CD8-positive, alpha-beta T cell (primary cell): ENCODE measurements at regions of chr19 and their contacts with region 1.

Region 1: GRCh38 chr19:23914402-23915301 is at the start of gene ZNF726:
- DNase-seq: peak; percentile 74 to 94 (median 86)
- ATAC-seq: peak; percentile 98
- H3K4me3 ChIP-seq: peak within 1 kb of the TSS; percentile 56 to 72
- H3K4me3 Mint-ChIP-seq: peak within 1 kb of the TSS; percentile 94
- H3K27ac ChIP-seq: peak within 1 kb of the TSS; percentile 43 to 47
- H3K27ac Mint-ChIP-seq: peak within 1 kb of the TSS; percentile 88
- H3K4me1 ChIP-seq: peaks cover 6% of the 10 kb centered on the region
- H3K4me1 Mint-ChIP-seq: peaks cover 13% of the 10 kb centered on the region
- H3K27me3 ChIP-seq: no peaks in the 10 kb centered on the region
- H3K27me3 Mint-ChIP-seq: no peaks in the 10 kb centered on the region
- CTCF ChIP-seq: no peak
- total RNA-seq, gene ZNF726: 3.5 to 4.4 TPM

Region 2: DNA sequence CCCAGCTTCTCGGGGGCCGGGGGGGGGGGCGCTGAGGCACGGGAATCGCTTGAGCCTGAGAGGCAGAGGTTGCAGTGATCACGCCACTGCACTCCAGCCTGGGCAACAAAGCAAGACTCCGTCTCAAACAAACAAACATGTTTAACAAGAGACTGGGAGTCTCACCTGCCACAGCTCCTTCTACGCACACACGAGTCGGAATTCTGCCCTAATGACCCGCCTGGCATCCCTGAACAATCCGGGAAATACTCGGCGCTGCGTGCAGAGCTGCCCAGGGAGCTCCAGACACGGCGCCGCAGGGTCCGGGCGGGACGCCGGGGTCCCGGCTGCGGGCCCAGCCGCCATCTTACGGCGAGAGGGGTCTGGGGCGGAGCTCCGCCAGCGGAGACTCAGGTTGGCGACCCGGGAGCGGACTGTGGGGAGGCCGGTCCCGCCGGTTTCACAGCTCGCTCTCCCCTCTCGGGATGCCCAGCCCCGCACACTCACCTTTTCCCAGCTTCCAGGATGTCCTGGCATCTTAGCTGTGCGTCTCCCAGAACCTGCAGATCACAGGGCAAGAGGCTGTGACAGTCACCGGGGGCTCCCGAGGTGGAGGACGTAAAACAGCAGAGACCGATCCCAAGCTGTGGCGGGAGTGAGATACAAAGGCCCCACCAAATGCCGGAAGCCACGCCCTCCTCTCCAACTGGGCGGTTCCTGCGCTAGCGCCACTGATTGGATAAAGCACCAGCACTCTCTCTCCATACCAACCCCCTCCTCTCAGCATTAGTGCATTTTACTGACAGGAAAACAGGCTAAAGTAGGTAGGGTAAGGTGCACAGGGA is 640.9 kb before region 1 on chr19:
- CTCF ChIA-PET with region 1: no interaction called
- POLR2A ChIA-PET with region 1: interaction called, 7 read pairs
- intact Hi-C with region 1: loop called (anchors 5 to 10 kb)
- DNase-seq: peak; percentile 80 to 95 (median 92)
- ATAC-seq: peak; percentile 98
- H3K4me3 ChIP-seq: peak overlapping the region; percentile 80 to 95
- H3K4me3 Mint-ChIP-seq: peak overlapping the region; percentile 98
- H3K27ac ChIP-seq: peak overlapping the region; percentile 78 to 83
- H3K27ac Mint-ChIP-seq: peak overlapping the region; percentile 97
- H3K4me1 ChIP-seq: peaks cover 8% of the 10 kb centered on the region
- H3K4me1 Mint-ChIP-seq: peaks cover 35% of the 10 kb centered on the region
- H3K27me3 ChIP-seq: no peaks in the 10 kb centered on the region
- H3K27me3 Mint-ChIP-seq: no peaks in the 10 kb centered on the region
- CTCF ChIP-seq: no peak

Region 3: DNA sequence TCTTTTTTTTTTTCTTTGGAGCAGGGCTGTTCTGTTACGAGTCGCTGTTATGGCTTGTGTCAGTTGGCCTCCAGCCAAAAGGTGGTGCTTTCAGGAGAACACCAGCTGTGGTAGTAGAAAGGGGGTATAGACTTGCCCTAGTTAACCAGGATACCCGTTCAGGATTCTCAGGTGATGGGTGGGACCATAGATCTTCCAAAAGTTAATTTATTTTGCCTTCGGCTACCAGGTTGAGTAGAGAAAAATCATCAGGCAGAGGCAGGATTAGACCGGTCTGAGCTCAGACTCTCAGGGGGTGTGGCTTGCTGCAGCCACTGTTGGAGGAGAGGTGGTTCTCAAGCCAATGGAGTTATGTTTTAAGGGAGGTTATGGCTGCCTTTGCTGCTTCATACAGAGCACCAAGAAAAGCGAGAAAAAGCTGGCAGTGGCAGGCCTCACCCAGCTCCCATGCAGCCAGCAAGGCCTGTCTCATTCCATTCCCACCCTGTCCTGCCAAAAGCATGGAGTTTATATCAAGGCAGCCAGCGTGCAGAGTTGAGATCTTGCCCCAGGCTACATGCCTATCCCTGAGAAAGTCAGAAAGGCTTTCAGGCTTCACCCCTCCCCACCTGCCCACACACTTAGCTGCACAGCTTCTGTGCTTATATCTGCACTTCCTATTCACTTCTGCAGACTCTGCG is 215.4 kb before region 1 on chr19:
- CTCF ChIA-PET with region 1: no interaction called
- POLR2A ChIA-PET with region 1: no interaction called
- intact Hi-C with region 1: no loop called
- DNase-seq: peak in 2 of 9 experiments; percentile 20 to 21
- ATAC-seq: peak; percentile 54
- H3K4me3 ChIP-seq: no peak overlapping the region
- H3K4me3 Mint-ChIP-seq: peak overlapping the region; percentile 44
- H3K27ac ChIP-seq: no peak overlapping the region
- H3K27ac Mint-ChIP-seq: peak overlapping the region; percentile 78
- H3K4me1 ChIP-seq: no peaks in the 10 kb centered on the region
- H3K4me1 Mint-ChIP-seq: peaks cover 3% of the 10 kb centered on the region
- H3K27me3 ChIP-seq: no peaks in the 10 kb centered on the region
- H3K27me3 Mint-ChIP-seq: peaks cover 5% of the 10 kb centered on the region
- CTCF ChIP-seq: no peak

Region 4: DNA sequence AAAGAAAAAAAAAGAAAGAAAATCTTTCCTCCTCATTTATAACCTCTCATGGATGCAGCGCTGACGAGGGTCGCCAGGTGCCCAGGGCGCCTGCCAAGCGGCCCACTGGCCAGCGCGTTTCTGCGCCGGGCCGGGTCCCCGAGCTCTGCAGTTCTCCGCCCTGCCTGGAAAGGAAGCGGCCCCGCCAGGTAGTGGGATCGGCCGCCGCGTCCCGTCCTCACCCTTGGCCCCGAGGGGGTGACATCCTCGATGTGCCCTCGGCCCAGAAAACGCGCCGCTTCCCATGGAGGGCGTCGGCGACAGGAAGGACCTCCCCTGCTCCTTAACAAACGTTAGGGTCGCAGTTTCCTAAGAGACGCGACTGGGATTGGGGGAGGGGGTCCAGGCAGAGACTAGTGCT is 56.9 kb after region 1 on chr19:
- CTCF ChIA-PET with region 1: no interaction called
- POLR2A ChIA-PET with region 1: no interaction called
- intact Hi-C with region 1: no loop called
- DNase-seq: peak in 1 of 9 experiments; percentile 6
- ATAC-seq: no peak
- H3K4me3 ChIP-seq: no peak overlapping the region
- H3K4me3 Mint-ChIP-seq: no peak overlapping the region
- H3K27ac ChIP-seq: no peak overlapping the region
- H3K27ac Mint-ChIP-seq: no peak overlapping the region
- H3K4me1 ChIP-seq: no peaks in the 10 kb centered on the region
- H3K4me1 Mint-ChIP-seq: peaks cover 5% of the 10 kb centered on the region
- H3K27me3 ChIP-seq: peaks cover 0 to 7% of the 10 kb centered on the region in 2 experiments
- H3K27me3 Mint-ChIP-seq: peaks cover 36% of the 10 kb centered on the region
- CTCF ChIP-seq: no peak

Region 5: GRCh38 chr19:24033301-24033962 is 118.8 kb after region 1 on chr19:
- CTCF ChIA-PET with region 1: no interaction called
- POLR2A ChIA-PET with region 1: interaction called, 10 read pairs
- intact Hi-C with region 1: loop called (anchors 1 to 2 kb)
- DNase-seq: peak; percentile 70 to 92 (median 84)
- ATAC-seq: peak; percentile 99
- H3K4me3 ChIP-seq: peak overlapping the region; percentile 99
- H3K4me3 Mint-ChIP-seq: peak overlapping the region; percentile 100
- H3K27ac ChIP-seq: peak overlapping the region; percentile 88 to 92
- H3K27ac Mint-ChIP-seq: peak overlapping the region; percentile 99
- H3K4me1 ChIP-seq: peaks cover 34% of the 10 kb centered on the region
- H3K4me1 Mint-ChIP-seq: peaks cover 48% of the 10 kb centered on the region
- H3K27me3 ChIP-seq: no peaks in the 10 kb centered on the region
- H3K27me3 Mint-ChIP-seq: no peaks in the 10 kb centered on the region
- CTCF ChIP-seq: no peak

Region 6: GRCh38 chr19:24086974-24087595 is 172.4 kb after region 1 on chr19 and contains the start of gene ZNF254:
- CTCF ChIA-PET with region 1: no interaction called
- POLR2A ChIA-PET with region 1: interaction called, 8 read pairs
- intact Hi-C with region 1: loop called (anchors 1 to 5 kb)
- DNase-seq: peak; percentile 58 to 91 (median 78)
- ATAC-seq: peak; percentile 99
- H3K4me3 ChIP-seq: peak within 1 kb of the TSS; percentile 70 to 99
- H3K4me3 Mint-ChIP-seq: peak within 1 kb of the TSS; percentile 96
- H3K27ac ChIP-seq: peak within 1 kb of the TSS; percentile 80 to 92
- H3K27ac Mint-ChIP-seq: peak within 1 kb of the TSS; percentile 97
- H3K4me1 ChIP-seq: peaks cover 10% of the 10 kb centered on the region
- H3K4me1 Mint-ChIP-seq: peaks cover 24% of the 10 kb centered on the region
- H3K27me3 ChIP-seq: no peaks in the 10 kb centered on the region
- H3K27me3 Mint-ChIP-seq: no peaks in the 10 kb centered on the region
- CTCF ChIP-seq: no peak
- total RNA-seq, gene ZNF254: 11.2 to 14.2 TPM